PC-9 (cell line): ENCODE measurements at regions of chr12 and their contacts with region 1.

Region 1: DNA sequence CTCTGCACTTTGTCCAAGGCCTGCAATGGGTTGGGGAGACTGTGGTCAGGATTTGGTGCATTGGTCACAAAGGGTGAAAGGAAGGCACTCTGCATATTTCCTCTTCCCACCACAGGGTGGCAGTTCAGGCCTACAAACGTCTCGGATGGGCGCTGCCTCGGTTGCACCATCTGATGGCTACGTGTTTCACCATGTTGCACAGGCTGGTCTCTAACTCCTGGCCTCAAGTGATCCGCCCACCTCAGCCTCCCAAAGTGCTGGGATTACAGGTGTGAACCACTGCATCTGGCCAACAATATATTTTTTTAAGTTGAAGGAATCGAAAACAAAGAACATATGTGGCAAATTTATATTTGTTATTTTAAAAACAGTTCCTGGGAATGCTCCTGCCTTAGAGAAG is 35.1 kb downstream of the TMBIM6 start:
- DNase-seq: peak; percentile 51 to 54
- H3K4me3 ChIP-seq: no peak overlapping the region
- H3K27ac ChIP-seq: no peak overlapping the region
- H3K4me1 ChIP-seq: no peaks in the 10 kb centered on the region
- H3K27me3 ChIP-seq: no peaks in the 10 kb centered on the region
- CTCF ChIP-seq: peak; percentile 88

Region 2: DNA sequence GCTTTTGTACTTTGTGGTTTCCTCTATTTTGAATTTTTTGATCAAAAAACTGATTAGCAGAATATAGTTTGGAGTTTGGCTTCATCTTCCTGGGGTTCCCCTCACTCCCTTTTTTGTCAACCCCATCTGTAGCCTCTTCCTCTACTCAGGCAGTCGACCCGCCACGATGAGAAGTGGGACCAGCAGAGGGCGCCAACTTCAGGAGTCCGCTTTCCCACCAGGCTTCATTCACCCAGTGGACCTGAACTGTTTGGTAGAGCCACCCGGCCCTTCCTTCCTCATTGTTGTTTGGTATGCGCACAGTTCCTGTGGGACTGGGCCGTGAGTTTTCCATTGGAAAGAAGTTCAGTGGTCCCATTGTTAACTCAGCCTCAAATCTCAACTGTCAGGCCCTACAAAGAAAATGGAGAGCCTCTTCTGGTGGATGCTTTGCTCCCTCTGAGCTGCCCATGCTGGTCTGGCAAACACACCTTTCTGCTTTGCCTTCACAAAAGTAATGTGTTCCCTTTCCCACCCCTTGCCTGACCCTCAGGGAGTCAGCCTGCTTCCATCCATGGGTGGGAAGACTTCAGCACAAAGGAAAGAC is 13.3 kb before region 1 on chr12:
- CTCF ChIA-PET with region 1: interaction called, 4 read pairs
- POLR2A ChIA-PET with region 1: interaction called, 20 read pairs
- intact Hi-C with region 1: no loop called
- DNase-seq: peak in 1 of 2 experiments; percentile 41
- H3K4me3 ChIP-seq: no peak overlapping the region
- H3K27ac ChIP-seq: no peak overlapping the region
- H3K4me1 ChIP-seq: no peaks in the 10 kb centered on the region
- H3K27me3 ChIP-seq: no peaks in the 10 kb centered on the region
- CTCF ChIP-seq: peak; percentile 65

Region 3: DNA sequence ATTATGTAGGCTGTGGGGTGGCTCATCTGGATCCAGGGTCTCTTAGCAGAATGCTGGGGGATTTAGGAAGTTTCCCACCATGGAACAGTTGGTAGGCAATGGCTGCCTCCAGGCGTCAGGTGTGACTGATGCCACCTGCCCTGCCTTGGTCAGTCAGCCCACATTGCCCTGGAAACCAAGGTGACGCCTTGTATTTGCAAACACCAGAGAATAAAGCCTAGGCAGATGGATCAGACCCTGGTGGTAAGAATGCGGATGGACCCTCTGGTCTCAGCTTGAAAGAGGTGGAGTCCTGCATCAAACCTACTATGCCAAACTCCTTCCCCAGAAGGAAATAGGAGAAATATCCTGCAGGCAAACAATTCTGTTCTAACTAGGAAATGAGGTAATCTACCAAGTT is 13.6 kb after region 1 on chr12:
- CTCF ChIA-PET with region 1: no interaction called
- POLR2A ChIA-PET with region 1: no interaction called
- intact Hi-C with region 1: no loop called
- DNase-seq: no peak
- H3K4me3 ChIP-seq: no peak overlapping the region
- H3K27ac ChIP-seq: no peak overlapping the region
- H3K4me1 ChIP-seq: peaks cover 3% of the 10 kb centered on the region; the same call in 1 of the 2 replicates
- H3K27me3 ChIP-seq: no peaks in the 10 kb centered on the region
- CTCF ChIP-seq: no peak

Region 4: DNA sequence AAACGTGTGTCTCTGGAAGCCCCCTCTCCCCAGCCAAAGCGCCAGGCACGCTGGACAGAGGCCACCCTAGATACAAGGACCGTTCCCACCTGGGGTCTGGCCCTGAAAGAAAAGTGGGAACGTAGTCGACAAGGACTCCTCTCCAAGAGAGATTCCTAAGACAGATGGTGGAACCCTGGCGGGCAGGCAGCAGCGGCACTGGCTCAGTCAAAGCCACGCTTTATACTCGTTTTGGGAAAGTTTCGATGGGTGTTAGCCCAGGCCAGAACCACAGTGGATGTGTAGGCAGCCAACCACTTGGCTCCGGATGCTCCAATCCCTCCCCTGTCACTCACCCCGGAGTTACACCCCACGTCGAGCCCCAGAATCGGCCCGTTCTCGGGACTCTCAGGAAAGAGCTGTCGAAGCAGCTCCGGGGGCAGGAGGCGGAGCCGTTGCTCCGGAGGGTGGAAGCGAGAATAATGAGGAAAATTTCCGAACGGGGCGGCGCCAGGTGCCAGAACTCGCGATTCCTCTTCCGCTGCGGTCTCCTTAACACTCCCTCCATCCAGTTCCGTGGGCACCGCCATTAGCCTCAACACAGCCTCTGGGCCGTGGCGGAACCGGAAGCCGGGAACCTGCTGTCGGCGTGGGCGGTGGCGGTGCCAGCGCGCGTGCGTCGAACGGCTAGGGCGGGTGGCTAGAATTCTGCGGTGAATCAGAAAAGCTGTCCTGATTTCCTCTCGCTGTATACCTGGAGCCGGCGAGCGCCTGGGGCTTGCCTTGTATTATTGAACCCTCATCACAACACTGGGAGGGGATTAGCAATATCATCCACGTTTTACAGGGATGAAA is 66.3 kb after region 1 on chr12 and contains the start of gene BCDIN3D:
- CTCF ChIA-PET with region 1: no interaction called
- POLR2A ChIA-PET with region 1: interaction called, 6 read pairs
- intact Hi-C with region 1: loop called (anchors 1 kb)
- DNase-seq: peak; percentile 89 to 92
- H3K4me3 ChIP-seq: peak within 1 kb of the TSS; percentile 69
- H3K27ac ChIP-seq: peak within 1 kb of the TSS; percentile 77
- H3K4me1 ChIP-seq: peaks cover 21% of the 10 kb centered on the region
- H3K27me3 ChIP-seq: no peaks in the 10 kb centered on the region
- CTCF ChIP-seq: no peak
- total RNA-seq, gene BCDIN3D: 2.5 and 4.7 TPM in 2 replicates

Region 5: DNA sequence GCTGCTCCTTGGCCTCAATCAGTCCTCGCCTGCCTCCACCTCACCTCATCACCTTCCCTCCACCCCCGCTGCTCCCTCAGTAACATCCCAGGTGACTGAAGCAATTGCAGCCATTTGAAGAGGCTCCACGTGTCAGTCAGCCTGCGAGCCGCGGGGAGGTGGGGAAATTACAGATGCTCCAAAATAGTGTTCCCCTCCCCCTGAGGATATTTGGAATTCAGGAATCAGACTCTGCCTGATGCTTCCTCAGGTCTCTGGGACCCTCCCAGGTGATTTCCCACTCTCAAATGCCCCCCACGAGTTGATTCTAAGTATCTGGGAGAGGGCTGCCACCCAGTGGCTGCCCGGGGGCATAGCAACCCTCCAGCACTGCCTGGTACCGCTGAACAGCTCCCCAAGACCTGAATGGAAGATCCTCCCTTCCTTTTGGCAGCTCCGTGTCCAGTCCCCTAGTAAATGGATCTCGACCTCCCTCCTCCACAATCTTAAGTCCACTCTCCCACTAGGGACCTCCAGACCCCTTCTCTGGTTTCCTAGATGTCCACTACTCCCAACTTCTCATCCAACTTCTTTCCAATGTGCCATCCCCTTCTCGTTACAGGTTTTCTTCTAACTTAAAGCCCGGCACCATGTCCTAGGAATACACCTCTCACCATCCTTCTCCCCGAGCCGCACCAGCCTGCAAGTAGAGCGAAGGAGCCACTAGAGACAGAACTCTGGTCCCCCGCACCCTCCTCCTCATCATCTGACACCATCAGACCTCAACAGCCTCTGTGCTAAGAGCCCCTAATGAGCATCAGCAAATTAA is 279.6 kb after region 1 on chr12:
- CTCF ChIA-PET with region 1: interaction called, 3 read pairs
- POLR2A ChIA-PET with region 1: no interaction called
- intact Hi-C with region 1: loop called (anchors 1 kb)
- DNase-seq: peak in 1 of 2 experiments; percentile 37
- H3K4me3 ChIP-seq: no peak overlapping the region
- H3K27ac ChIP-seq: no peak overlapping the region
- H3K4me1 ChIP-seq: peaks cover 5% of the 10 kb centered on the region
- H3K27me3 ChIP-seq: peaks cover 23% of the 10 kb centered on the region
- CTCF ChIP-seq: peak; percentile 93

Region 6: GRCh38 chr12:50174971-50175715 is 398.7 kb after region 1 on chr12:
- CTCF ChIA-PET with region 1: no interaction called
- POLR2A ChIA-PET with region 1: no interaction called
- intact Hi-C with region 1: loop called (anchors 2 kb)
- DNase-seq: peak in 1 of 2 experiments; percentile 51
- H3K4me3 ChIP-seq: no peak overlapping the region
- H3K27ac ChIP-seq: no peak overlapping the region
- H3K4me1 ChIP-seq: no peaks in the 10 kb centered on the region
- H3K27me3 ChIP-seq: no peaks in the 10 kb centered on the region
- CTCF ChIP-seq: peak; percentile 78